ENCODE measurements at regions of chr3 and their contacts with region 1.

Region 1: DNA sequence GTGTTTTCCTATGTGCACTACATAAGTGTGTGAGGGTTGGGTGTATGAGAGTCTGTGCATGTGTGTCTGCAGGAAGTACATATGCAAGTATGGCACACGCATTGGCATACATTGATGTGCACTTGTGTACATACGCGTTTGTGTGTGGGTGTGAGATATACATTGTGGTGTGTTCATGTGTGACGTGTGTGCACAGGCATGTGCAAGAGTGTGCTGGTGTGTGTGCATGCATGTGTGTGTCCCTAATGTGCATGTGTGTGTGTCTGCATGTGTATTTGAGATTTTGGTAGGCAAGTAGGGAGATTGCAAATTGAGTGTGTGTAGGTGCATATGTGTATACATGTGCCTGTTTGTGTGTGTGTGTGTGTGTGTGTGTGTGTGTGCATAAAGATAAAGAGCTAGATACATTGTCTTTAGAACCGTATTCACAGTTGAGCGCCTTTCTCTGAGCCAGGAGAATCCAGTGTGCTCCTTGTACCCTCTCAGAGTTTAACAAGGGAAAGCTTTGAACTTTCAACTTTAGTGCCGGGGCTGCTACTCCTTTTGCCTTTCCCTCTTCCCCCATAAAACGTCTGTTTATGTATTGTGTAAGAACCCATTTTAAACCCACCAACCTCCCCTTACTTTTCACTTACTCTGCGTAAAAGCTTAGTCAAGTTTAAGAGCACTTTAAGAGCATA is 152.4 kb upstream of the CHL1 start:
- DNase-seq: no peak
- H3K4me3 ChIP-seq: no peak overlapping the region
- H3K27ac ChIP-seq: no peak overlapping the region
- H3K4me1 ChIP-seq: no peaks in the 10 kb centered on the region
- H3K27me3 ChIP-seq: no peaks in the 10 kb centered on the region
- CTCF ChIP-seq: no peak

Region 2: GRCh38 chr3:85180-85579 is 41.0 kb after region 1 on chr3:
- CTCF ChIA-PET with region 1: no interaction called
- dilution Hi-C with region 1: no loop called
- in situ Hi-C with region 1: no loop called
- intact Hi-C with region 1: no loop called
- DNase-seq: no peak
- H3K4me3 ChIP-seq: no peak overlapping the region
- H3K27ac ChIP-seq: no peak overlapping the region
- H3K4me1 ChIP-seq: no peaks in the 10 kb centered on the region
- H3K27me3 ChIP-seq: no peaks in the 10 kb centered on the region
- CTCF ChIP-seq: no peak

Region 3: DNA sequence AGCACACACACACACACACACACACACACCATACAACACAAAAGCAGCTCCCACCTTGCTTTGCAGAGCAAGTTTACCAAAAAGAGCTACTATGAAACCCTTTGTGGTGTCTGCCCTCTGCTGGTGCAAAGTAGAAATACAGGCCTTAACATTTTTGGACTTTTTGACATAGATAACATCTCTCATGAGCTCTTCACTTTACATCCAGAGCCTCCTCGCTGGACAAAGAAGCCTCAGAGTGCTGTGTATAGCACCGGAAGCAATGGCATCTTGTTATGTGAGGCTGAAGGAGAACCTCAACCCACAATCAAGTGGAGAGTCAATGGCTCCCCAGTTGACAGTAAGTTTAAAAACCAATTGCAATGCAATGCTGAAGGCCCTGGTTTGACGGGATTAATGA is 310.3 kb after region 1 on chr3:
- CTCF ChIA-PET with region 1: interaction called, 6 read pairs
- dilution Hi-C with region 1: no loop called
- in situ Hi-C with region 1: no loop called
- intact Hi-C with region 1: loop called (anchors 1 kb)
- DNase-seq: peak; percentile 31
- H3K4me3 ChIP-seq: no peak overlapping the region
- H3K27ac ChIP-seq: no peak overlapping the region
- H3K4me1 ChIP-seq: no peaks in the 10 kb centered on the region
- H3K27me3 ChIP-seq: no peaks in the 10 kb centered on the region
- CTCF ChIP-seq: peak; percentile 81

Region 4: GRCh38 chr3:377158-377561 is 333.0 kb after region 1 on chr3:
- CTCF ChIA-PET with region 1: no interaction called
- dilution Hi-C with region 1: no loop called
- in situ Hi-C with region 1: no loop called
- intact Hi-C with region 1: loop called (anchors 1 kb)
- DNase-seq: peak; percentile 26
- H3K4me3 ChIP-seq: peak overlapping the region in 2 of 3 experiments; percentile 8 to 9
- H3K27ac ChIP-seq: no peak overlapping the region
- H3K4me1 ChIP-seq: no peaks in the 10 kb centered on the region
- H3K27me3 ChIP-seq: no peaks in the 10 kb centered on the region
- CTCF ChIP-seq: peak; percentile 42 to 51

Measured in mammary epithelial cell (primary cell).